ENCODE measurements at regions of chr2 and their contacts with region 1.

Region 1: GRCh38 chr2:199850718-199851500 is at the start of gene FTCDNL1:
- DNase-seq: peak; percentile 76
- H3K4me3 ChIP-seq: peak within 1 kb of the TSS; percentile 50 to 61
- H3K27ac ChIP-seq: no peak within 1 kb of the TSS
- H3K4me1 ChIP-seq: peaks cover 0 to 4% of the 10 kb centered on the region in 2 experiments; a peak in 1 of 4 replicates
- H3K27me3 ChIP-seq: peaks cover 68% of the 10 kb centered on the region
- CTCF ChIP-seq: peak; percentile 64
- EP300 ChIP-seq: no peak
- RAD21 ChIP-seq: 0 out of 2 replicates have a peak, but pooled peaks have one; percentile 17
- polyA plus RNA-seq, gene FTCDNL1: not detected in 2 replicates

Region 2: GRCh38 chr2:199459286-199460016 is 391.5 kb before region 1 on chr2:
- CTCF ChIA-PET with region 1: no interaction called
- POLR2A ChIA-PET with region 1: no interaction called
- DNase-seq: peak; percentile 83
- H3K4me3 ChIP-seq: peak overlapping the region; percentile 65 to 87
- H3K27ac ChIP-seq: no peak overlapping the region
- H3K4me1 ChIP-seq: peaks cover 0 to 12% of the 10 kb centered on the region in 2 experiments; a peak in 1 of 4 replicates
- H3K27me3 ChIP-seq: peaks cover 85% of the 10 kb centered on the region
- CTCF ChIP-seq: no peak
- EP300 ChIP-seq: no peak
- RAD21 ChIP-seq: no peak

Region 3: GRCh38 chr2:199861132-199861774 is 10.3 kb after region 1 on chr2:
- CTCF ChIA-PET with region 1: interaction called, 12 read pairs
- POLR2A ChIA-PET with region 1: no interaction called
- DNase-seq: peak; percentile 18
- H3K4me3 ChIP-seq: no peak overlapping the region
- H3K27ac ChIP-seq: no peak overlapping the region
- H3K4me1 ChIP-seq: no peaks in the 10 kb centered on the region
- H3K27me3 ChIP-seq: peaks cover 21% of the 10 kb centered on the region; the same call in 1 of the 2 replicates
- CTCF ChIP-seq: peak; percentile 71
- EP300 ChIP-seq: no peak
- RAD21 ChIP-seq: peak; percentile 59